ENCODE measurements at regions of chr1 and their contacts with region 1.

Region 1: DNA sequence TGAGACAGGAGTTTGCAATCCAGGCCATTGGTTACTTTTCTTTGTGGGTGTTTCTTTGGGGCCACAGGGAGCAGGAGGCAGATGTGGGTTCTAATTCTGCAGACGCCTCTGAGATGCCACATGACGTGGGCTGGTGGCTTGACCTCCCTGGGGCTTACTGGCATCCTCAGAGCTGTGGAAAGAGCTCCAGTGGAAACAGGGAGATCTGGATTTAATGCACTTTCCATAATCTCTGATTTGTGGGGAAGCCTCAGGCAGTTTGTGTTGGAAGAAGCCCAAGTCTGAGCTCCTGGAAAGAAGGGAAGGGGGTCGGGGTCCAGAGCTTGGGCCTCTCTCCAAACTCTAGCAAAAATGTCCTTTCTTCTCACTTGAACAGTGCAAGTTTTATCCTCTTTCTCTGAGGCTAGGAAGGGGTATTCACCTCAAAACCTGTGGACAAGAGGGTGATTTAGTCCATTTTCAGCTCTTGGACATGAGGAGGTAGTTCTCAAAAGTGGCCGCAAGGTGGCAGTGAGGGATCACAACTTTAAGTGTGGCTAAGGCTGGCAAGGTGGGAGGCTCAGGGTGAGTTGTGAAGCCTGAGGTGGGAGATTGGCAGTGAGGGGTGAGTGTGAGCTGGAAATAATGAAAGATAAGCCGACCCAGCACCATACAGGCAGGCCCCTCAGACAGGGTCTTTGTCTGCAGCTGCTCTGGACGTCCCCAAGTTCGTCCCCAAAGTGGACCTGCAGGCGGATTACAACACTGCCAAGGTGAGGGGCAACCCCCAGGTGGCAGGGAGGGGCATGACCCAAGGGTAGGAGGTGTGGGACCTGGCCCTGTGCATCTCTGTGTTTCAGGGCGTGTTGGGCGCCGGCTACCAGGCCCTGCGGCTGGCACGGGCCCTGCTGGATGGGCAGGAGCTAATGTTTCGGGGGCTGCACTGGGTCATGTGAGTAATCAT is 9.2 kb downstream of the IKBKE start:
- H3K4me3 ChIP-seq: no peak overlapping the region
- H3K27ac ChIP-seq: no peak overlapping the region
- H3K4me1 ChIP-seq: no peaks in the 10 kb centered on the region
- CTCF ChIP-seq: peak; percentile 87

Region 2: DNA sequence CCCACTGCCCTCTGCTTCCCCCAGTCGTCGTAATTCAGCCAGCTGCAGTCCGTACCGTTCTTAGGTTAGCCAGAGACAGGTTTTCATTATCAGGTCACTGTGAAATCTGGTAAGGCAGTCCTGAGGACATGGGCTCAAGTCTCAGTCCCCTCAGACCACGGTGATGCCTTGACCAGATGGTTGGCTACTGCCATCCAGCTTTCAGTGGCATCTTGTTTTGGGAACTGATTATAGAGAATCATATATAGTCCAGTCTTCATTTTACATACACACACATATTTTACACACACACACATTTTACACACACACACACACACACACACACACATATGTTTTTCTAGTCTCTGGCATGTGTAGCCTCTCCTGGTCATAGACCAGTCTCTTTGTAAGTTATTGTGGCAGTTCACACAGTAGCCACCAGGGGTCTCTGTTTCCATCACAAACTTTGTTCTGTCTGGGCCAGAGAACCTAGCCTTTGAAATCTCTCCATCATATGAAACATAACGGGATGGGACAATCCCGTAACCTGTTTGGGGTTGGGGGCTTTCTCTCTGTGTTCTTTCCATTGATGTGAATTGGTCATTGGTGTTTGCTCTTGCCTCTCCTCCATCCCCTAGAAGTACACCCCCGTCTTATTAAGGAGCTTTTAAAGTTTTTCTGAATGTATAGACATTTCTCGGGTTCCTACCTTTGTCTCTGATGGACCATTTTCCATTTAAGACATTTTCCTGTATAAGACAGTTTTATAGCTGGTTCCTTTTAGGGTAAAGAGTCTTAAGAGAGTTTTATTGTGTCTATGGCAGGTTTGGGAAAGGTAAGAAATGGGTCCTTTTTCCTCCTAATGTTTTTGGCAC is 17.6 kb before region 1 on chr1:
- CTCF ChIA-PET with region 1: interaction called, 23 read pairs
- POLR2A ChIA-PET with region 1: no interaction called
- H3K4me3 ChIP-seq: no peak overlapping the region
- H3K27ac ChIP-seq: no peak overlapping the region
- H3K4me1 ChIP-seq: no peaks in the 10 kb centered on the region
- CTCF ChIP-seq: peak; percentile 60

Region 3: DNA sequence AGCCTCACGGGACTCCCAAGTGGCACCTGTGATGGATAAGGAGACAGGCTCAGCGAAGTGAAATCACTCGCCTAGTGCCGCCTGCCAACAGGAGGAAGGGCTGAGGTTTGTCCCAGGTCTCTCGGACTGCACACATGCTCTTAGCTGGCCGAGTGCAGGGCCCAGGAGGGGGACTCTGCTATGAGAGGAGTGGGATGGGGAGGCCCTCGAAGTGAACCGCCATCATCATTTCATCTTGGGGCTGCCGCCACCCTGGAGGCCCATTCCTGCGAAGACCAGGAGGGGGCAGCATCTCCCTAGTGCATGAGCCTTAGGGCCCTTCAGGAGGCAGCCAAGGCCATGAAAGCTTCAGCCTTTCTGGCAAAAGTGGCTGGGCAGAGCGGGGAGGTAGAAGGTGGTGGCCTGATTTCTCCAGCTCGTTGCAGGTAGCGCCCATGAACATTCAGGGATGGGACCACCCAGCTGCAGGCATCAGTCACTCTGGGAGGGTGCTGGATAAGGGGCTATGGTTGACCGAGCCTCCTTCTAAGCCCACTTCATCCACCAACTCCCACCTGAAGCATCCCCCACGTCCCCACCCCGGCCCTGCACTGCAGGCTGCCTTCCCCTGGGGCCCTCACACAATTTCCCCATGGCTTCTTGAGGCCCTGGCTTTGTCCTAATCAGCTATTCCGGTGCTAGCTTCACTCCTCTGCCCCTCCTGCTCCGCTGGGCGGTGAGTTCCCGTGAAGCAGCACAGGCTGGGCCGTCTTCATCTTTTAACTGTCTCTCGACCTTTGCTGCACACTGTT is 10.7 kb after region 1 on chr1:
- CTCF ChIA-PET with region 1: interaction called, 37 read pairs
- POLR2A ChIA-PET with region 1: no interaction called
- H3K4me3 ChIP-seq: no peak overlapping the region
- H3K27ac ChIP-seq: no peak overlapping the region
- H3K4me1 ChIP-seq: 0 out of 2 replicates have a peak, but pooled peaks cover under 1% of the 10 kb centered on the region
- CTCF ChIP-seq: peak; percentile 94

Region 4: GRCh38 chr1:206575165-206575893 is 95.9 kb after region 1 on chr1:
- CTCF ChIA-PET with region 1: interaction called, 12 read pairs
- POLR2A ChIA-PET with region 1: no interaction called
- H3K4me3 ChIP-seq: no peak overlapping the region
- H3K27ac ChIP-seq: no peak overlapping the region
- H3K4me1 ChIP-seq: no peaks in the 10 kb centered on the region
- CTCF ChIP-seq: no peak

Measured in HEK293 (cell line).